Thyroid gland (tissue), 4 donors: ENCODE measurements at regions of chr15 and their contacts with region 1.

Region 1: DNA sequence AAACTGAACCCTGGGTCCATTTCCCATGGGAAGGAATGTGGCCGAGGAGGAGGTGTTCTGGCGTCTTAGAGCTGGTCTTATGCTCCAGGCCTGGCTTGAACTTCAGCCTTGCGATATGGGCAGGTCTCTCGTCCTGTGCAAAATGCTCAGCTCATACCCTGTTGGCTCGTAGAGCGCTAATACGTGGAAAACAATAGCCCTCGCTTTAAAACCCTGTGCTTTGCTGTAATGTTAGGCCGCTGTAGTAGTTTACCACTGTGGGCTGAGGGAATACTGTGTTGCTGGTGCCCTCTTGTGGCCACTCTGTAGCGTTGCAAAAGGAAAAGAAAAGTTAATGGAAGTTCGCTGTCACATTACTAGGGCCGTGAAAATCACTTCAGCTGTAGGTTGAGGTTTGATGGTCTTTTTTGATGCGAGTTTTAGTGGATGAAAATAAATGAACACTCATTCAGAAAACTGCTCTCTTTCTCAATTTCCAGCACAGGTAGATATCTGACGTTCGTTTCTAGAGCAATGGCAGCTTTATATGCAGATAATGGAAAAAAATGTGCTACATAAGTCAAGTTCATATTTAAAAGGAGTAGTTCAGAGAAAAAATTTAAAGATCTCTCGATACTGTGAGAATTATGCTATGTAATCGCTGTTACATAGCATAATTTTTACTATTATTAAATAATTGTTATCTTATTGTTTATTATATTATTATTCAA is 92.9 kb downstream of the MCTP2 start:
- DNase-seq: peak; percentile 35 to 52
- H3K4me3 ChIP-seq: no peak overlapping the region
- H3K27ac ChIP-seq: no peak overlapping the region
- H3K4me1 ChIP-seq: no peaks in the 10 kb centered on the region
- H3K27me3 ChIP-seq: no peaks in the 10 kb centered on the region
- CTCF ChIP-seq: peak; percentile 85 to 96 (median 88)
- POLR2A ChIP-seq: no peak

Region 2: GRCh38 chr15:94163999-94164807 is 160.1 kb before region 1 on chr15:
- intact Hi-C with region 1: loop called (anchors 2 kb)
- DNase-seq: peak; percentile 52 to 66
- H3K4me3 ChIP-seq: no peak overlapping the region
- H3K27ac ChIP-seq: no peak overlapping the region
- H3K4me1 ChIP-seq: no peaks in the 10 kb centered on the region
- H3K27me3 ChIP-seq: no peaks in the 10 kb centered on the region
- CTCF ChIP-seq: peak; percentile 48 to 90 (median 84)
- POLR2A ChIP-seq: no peak